Natural killer cell (primary cell): ENCODE measurements at regions of chr22 and their contacts with region 1.

Region 1: GRCh38 chr22:42090596-42091454 is at the start of gene NDUFA6:
- DNase-seq: peak; percentile 96 to 99
- ATAC-seq: peak; percentile 83 to 96 (median 84)
- H3K4me3 ChIP-seq: peak within 1 kb of the TSS; percentile 82
- H3K4me3 Mint-ChIP-seq: peak within 1 kb of the TSS; percentile 97
- H3K27ac ChIP-seq: peak within 1 kb of the TSS; percentile 94
- H3K27ac Mint-ChIP-seq: peak within 1 kb of the TSS; percentile 98 to 99
- H3K4me1 ChIP-seq: peaks cover 26% of the 10 kb centered on the region
- H3K4me1 Mint-ChIP-seq: peaks cover 22 to 31% of the 10 kb centered on the region in 2 donors
- H3K27me3 ChIP-seq: no peaks in the 10 kb centered on the region
- H3K27me3 Mint-ChIP-seq: no peaks in the 10 kb centered on the region
- CTCF ChIP-seq: peak; percentile 91
- total RNA-seq, gene NDUFA6: 50.4 to 69.7 (median 63.8) TPM

Region 2: DNA sequence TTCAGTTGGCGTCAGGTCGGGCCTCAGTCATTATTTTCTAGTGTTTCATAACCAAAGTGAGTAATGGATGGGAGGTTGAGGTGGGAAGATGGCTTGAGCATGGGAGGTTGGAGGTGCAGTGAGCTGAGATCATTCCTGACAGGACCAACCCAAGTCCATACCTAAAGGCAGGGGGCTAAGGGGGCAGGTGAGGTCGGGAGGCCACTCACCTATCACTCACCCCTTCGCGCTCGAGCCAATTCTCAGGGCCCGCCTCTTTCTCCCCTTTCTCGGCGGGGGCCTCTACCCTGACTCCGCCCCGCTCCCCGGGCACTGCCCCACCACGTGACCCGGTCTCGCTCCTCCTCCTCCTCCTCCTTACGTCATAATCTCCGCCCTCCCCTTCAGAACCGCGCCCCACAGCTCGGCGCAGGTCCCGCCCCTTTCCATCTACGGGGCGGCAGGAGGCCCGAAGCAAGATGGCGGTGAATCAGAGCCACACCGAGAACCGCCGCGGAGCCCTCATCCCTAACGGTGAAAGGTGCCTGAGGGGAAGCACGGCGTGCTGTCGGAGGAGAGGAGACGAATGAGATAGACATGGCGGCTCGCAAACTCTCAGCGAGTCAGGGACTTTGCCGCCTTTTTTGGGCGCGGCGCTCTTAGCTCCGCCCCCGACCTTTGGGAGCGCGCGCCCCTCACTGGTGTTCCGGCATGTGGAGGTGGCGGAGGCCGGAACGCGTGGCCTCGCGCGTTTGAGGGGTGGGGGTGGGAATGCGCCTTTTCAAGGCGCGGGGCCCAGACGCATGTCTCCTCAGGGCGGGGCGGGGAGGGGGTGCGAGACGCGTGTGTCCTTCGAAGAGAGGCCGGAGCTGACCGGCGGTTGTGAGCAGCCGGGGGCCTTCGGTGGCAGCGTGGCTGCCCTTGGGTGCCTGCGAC is 92.2 kb before region 1 on chr22 and contains the start of gene WBP2NL:
- intact Hi-C with region 1: loop called (anchors 1 kb)
- DNase-seq: peak; percentile 85 to 95
- ATAC-seq: peak; percentile 97 to 98 (median 98)
- H3K4me3 ChIP-seq: peak within 1 kb of the TSS; percentile 79
- H3K4me3 Mint-ChIP-seq: peak within 1 kb of the TSS; percentile 98
- H3K27ac ChIP-seq: peak within 1 kb of the TSS; percentile 73
- H3K27ac Mint-ChIP-seq: peak within 1 kb of the TSS; percentile 87 to 94
- H3K4me1 ChIP-seq: peaks cover 21% of the 10 kb centered on the region
- H3K4me1 Mint-ChIP-seq: peaks cover 5 to 22% of the 10 kb centered on the region in 2 donors
- H3K27me3 ChIP-seq: no peaks in the 10 kb centered on the region
- H3K27me3 Mint-ChIP-seq: peaks cover 0 to 12% of the 10 kb centered on the region in 2 donors
- CTCF ChIP-seq: no peak
- total RNA-seq, gene WBP2NL: 1.7 to 3.6 (median 3.0) TPM

Region 3: DNA sequence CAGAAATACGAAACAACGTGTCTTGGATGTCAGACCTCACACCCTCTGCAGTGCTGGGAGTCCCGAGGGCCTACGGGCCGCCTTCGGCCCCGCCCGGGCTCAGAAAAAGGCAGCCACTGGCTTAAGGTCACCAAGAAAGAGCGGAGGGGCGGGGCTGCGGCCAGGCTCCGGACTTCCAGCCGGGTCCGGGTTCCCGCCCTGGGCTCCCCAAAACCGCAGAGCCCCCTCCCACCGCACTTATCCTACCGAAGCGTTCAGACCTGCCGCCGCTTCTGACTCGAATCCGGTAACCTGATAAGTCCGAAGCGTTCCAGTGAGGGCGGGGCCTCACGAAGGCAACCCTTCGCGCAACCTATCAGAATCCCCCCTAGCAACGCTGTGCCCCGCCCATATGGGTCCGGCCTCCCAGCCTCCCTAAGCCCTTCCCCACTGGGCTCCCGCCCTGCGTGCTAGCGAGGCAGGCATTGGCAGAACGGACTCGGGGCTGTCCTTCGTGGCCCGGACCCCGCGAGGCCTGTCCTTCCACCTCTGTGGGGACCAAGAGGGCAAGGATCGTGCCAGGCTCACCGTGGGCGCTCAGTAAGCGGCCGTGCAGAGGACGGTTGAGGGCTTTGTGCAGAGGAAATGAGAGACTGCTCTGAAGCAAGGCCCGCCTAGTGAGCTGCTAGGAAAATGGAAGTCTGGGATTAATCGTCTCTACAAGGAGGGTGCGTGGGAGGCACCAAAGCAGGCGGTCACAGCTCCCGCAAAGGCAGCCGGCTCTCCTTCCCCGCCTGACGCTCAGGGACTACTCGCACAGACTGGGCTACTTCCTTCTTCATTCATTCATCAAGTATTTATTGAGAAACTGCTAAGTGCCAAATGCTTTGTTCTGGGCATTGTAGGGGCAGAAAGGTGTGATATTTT is 20.1 kb before region 1 on chr22 and contains the start of gene NAGA:
- intact Hi-C with region 1: loop called (anchors 1 kb)
- DNase-seq: peak; percentile 87 to 96
- ATAC-seq: peak; percentile 97 to 99 (median 98)
- H3K4me3 ChIP-seq: peak within 1 kb of the TSS; percentile 77
- H3K4me3 Mint-ChIP-seq: peak within 1 kb of the TSS; percentile 93
- H3K27ac ChIP-seq: peak within 1 kb of the TSS; percentile 66
- H3K27ac Mint-ChIP-seq: peak within 1 kb of the TSS; percentile 86 to 94
- H3K4me1 ChIP-seq: peaks cover 39% of the 10 kb centered on the region
- H3K4me1 Mint-ChIP-seq: peaks cover 19 to 38% of the 10 kb centered on the region in 2 donors
- H3K27me3 ChIP-seq: no peaks in the 10 kb centered on the region
- H3K27me3 Mint-ChIP-seq: no peaks in the 10 kb centered on the region
- CTCF ChIP-seq: no peak
- total RNA-seq, gene NAGA: 12.8 to 15.7 (median 14.2) TPM

Region 4: DNA sequence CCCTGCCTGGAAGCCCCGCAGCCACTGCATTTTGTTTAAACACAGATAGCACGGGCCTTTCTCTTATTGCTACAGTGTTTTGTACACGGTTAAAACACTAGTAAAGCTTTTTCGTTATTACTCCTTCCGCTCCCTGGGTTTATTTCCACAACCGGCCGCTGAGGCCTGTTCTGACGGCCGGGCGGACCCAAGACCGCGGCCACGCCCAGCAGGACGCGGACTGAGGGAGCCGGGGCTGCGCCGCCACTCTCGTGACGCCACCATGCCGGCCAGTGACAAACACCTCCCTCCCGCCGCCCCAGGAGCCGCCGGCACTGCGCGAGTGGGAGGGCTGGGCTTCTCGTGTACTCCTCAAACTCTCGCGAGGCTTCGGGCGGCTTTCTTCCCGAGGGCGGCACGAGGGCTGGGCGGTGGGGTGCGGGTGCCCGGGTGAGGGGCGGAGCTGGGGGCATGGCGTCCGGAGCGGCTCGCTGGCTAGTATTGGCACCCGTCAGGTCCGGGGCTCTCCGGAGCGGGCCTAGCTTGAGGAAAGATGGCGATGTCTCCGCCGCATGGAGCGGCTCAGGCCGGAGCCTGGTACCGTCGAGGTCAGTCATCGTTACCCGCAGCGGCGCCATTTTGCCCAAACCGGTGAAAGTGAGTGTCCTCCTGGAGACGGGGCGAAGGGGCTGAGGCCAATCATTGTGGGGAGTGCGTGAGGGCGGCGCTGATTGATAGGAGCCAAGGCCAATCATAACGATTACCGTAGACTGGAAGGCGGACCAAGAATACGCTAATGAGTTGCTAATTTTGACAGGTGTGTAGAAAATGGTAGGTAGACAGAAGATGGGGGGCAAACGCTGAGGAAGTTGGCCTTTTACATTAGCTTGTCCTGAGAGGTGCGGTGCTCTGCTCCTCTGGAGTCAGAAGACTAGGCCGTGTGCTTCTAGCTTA is 11.2 kb before region 1 on chr22 and contains the start of gene SMDT1:
- intact Hi-C with region 1: loop called (anchors 1 kb)
- DNase-seq: peak; percentile 98 to 99
- ATAC-seq: peak; percentile 87 to 96 (median 87)
- H3K4me3 ChIP-seq: peak within 1 kb of the TSS; percentile 73
- H3K4me3 Mint-ChIP-seq: peak within 1 kb of the TSS; percentile 96
- H3K27ac ChIP-seq: peak within 1 kb of the TSS; percentile 99
- H3K27ac Mint-ChIP-seq: peak within 1 kb of the TSS; percentile 97 to 100
- H3K4me1 ChIP-seq: peaks cover 21% of the 10 kb centered on the region
- H3K4me1 Mint-ChIP-seq: peaks cover 26 to 31% of the 10 kb centered on the region in 2 donors
- H3K27me3 ChIP-seq: no peaks in the 10 kb centered on the region
- H3K27me3 Mint-ChIP-seq: no peaks in the 10 kb centered on the region
- CTCF ChIP-seq: no peak
- total RNA-seq, gene SMDT1: 37.7 to 51.0 (median 45.1) TPM

Region 5: GRCh38 chr22:42202669-42203068 is 111.8 kb after region 1 on chr22:
- intact Hi-C with region 1: loop called (anchors 10 kb)
- DNase-seq: peak; percentile 40 to 63
- ATAC-seq: peak; percentile 75 to 79 (median 78)
- H3K4me3 ChIP-seq: no peak overlapping the region
- H3K4me3 Mint-ChIP-seq: peak overlapping the region; percentile 88
- H3K27ac ChIP-seq: peak overlapping the region; percentile 28
- H3K27ac Mint-ChIP-seq: peak overlapping the region; percentile 89 to 92
- H3K4me1 ChIP-seq: peaks cover 30% of the 10 kb centered on the region
- H3K4me1 Mint-ChIP-seq: peaks cover 46 to 49% of the 10 kb centered on the region in 2 donors
- H3K27me3 ChIP-seq: no peaks in the 10 kb centered on the region
- H3K27me3 Mint-ChIP-seq: no peaks in the 10 kb centered on the region
- CTCF ChIP-seq: no peak

Region 6: DNA sequence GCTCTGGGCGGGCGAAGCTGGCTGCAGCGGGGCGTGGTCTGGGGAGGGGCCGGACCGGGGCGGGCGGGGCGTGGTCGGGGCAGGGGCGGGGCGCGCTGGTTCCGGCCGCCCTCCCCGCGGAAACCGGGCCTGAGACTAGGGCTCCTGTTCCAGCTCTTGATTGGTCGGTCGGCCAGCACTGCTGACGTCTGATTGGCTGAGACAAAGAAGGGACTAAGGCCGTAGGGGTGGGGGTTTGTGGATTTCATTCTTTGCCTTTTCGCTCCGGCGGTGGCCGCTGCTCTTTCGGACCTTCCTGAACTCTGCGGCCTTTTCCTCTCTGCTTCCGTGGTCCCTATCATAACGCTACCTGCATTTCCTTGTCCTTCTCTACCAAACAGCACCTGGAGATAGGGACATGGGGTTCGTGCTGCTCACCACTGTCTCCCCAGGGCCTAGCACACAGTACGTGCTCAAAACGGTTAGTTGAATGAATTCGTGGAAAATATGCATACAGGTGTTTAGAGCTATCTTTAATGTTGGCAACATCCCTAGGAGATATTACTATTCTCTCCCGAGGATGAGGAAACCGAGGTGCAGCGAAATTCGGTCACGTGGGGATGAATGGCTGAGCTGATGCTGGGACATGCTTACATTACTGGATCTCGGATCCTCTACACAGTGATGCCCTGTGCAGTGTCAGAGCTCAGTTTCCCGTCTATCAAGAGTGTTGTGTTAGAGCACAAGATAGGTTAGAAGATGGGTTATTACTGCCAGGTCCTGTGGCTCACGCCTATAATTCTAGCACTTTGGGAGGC is 278.6 kb after region 1 on chr22:
- intact Hi-C with region 1: loop called (anchors 5 kb)
- DNase-seq: peak; percentile 65 to 90
- ATAC-seq: peak; percentile 97 to 98 (median 97)
- H3K4me3 ChIP-seq: peak overlapping the region; percentile 65
- H3K4me3 Mint-ChIP-seq: peak overlapping the region; percentile 97
- H3K27ac ChIP-seq: no peak overlapping the region
- H3K27ac Mint-ChIP-seq: peak overlapping the region in 1 of 2 donors; percentile 80
- H3K4me1 ChIP-seq: peaks cover 19% of the 10 kb centered on the region
- H3K4me1 Mint-ChIP-seq: peaks cover 6 to 28% of the 10 kb centered on the region in 2 donors
- H3K27me3 ChIP-seq: peaks cover 16% of the 10 kb centered on the region
- H3K27me3 Mint-ChIP-seq: peaks cover 26 to 38% of the 10 kb centered on the region in 2 donors
- CTCF ChIP-seq: no peak